Ovary (tissue), 10 donors: ENCODE measurements at regions of chr6 and their contacts with region 1.

Region 1: DNA sequence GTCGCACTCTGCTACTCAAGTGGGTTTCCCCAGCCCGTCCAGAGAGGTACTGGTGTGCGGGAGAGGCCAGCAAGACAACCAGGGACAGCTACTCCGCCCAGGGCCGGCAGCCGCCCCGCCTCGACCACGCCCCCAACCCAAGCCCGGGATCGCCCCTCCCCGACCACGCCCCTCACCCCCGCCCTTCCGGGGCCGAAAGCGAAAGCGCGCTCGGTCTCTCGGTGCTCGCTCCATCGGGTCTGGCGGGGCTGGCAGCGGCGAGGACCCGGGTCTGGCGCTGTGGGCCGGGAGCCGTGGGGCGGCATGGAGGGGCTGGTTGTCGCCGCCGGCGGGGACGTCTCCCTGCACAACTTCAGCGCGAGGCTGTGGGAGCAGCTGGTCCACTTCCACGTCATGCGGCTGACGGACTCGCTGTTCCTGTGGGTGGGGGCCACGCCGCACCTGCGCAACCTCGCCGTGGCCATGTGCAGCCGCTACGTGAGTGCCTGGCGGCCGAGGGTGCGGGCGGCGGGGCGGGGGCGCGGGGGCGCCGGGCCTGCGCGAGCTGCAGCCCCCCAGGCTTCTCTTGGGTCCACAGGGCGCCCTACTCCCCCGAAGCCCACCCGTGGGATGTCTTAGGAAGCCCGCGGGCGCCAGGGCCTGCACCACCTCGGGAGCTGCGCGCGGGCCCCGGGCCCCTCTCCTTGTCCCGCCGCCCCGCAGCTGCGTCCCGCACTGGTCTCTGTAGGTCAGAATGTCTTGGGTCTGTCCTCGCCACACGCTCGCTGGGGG is at the start of gene PSMG4:
- DNase-seq: peak; percentile 94 to 98 (median 97)
- H3K4me3 ChIP-seq: peak within 1 kb of the TSS; percentile 58
- H3K27ac ChIP-seq: peak within 1 kb of the TSS; percentile 16 to 23
- H3K4me1 ChIP-seq: peaks cover 14% of the 10 kb centered on the region
- H3K27me3 ChIP-seq: no peaks in the 10 kb centered on the region
- CTCF ChIP-seq: no peak
- EP300 ChIP-seq: no peak
- POLR2A ChIP-seq: peak; percentile 32
- total RNA-seq, gene PSMG4: 13.9 to 24.3 (median 22.7) TPM

Region 2: GRCh38 chr6:3162565-3163247 is 96.2 kb before region 1 on chr6:
- intact Hi-C with region 1: loop called in 1 of 4 experiments (anchors 10 kb)
- DNase-seq: peak; percentile 33 to 68 (median 59)
- H3K4me3 ChIP-seq: peak overlapping the region; percentile 47
- H3K27ac ChIP-seq: peak overlapping the region in 1 of 2 donors; percentile 48
- H3K4me1 ChIP-seq: peaks cover 3% of the 10 kb centered on the region
- H3K27me3 ChIP-seq: no peaks in the 10 kb centered on the region
- CTCF ChIP-seq: no peak
- EP300 ChIP-seq: no peak
- POLR2A ChIP-seq: no peak

Region 3: GRCh38 chr6:4008324-4009047 is 749.6 kb after region 1 on chr6:
- intact Hi-C with region 1: loop called in 1 of 4 experiments (anchors 10 kb)
- DNase-seq: no peak
- H3K4me3 ChIP-seq: no peak overlapping the region
- H3K27ac ChIP-seq: no peak overlapping the region
- H3K4me1 ChIP-seq: peaks cover 3% of the 10 kb centered on the region
- H3K27me3 ChIP-seq: no peaks in the 10 kb centered on the region
- CTCF ChIP-seq: peak in 2 of 3 donors; percentile 40 to 60
- EP300 ChIP-seq: no peak
- POLR2A ChIP-seq: no peak

Region 4: GRCh38 chr6:4135665-4136353 is 876.9 kb after region 1 on chr6:
- intact Hi-C with region 1: loop called in 1 of 4 experiments (anchors 10 kb)
- DNase-seq: peak; percentile 98 to 99 (median 99)
- H3K4me3 ChIP-seq: peak overlapping the region; percentile 73
- H3K27ac ChIP-seq: peak overlapping the region; percentile 61 to 81
- H3K4me1 ChIP-seq: peaks cover 5% of the 10 kb centered on the region
- H3K27me3 ChIP-seq: no peaks in the 10 kb centered on the region
- CTCF ChIP-seq: no peak
- EP300 ChIP-seq: no peak
- POLR2A ChIP-seq: no peak